GM12878 (cell line): ENCODE measurements at regions of chr12 and their contacts with region 1.

Region 1: GRCh38 chr12:107251288-107251687 is 157.9 kb upstream of the CRY1 start:
- DNase-seq: no peak
- ATAC-seq: no peak
- H3K4me3 ChIP-seq: no peak overlapping the region
- H3K27ac ChIP-seq: no peak overlapping the region
- H3K4me1 ChIP-seq: no peaks in the 10 kb centered on the region
- H3K27me3 ChIP-seq: no peaks in the 10 kb centered on the region
- CTCF ChIP-seq: no peak
- EP300 ChIP-seq: no peak
- POLR2A ChIP-seq: no peak
- RAD21 ChIP-seq: no peak

Region 2: GRCh38 chr12:107027636-107028053 is 223.6 kb before region 1 on chr12:
- CTCF ChIA-PET with region 1: no interaction called
- POLR2A ChIA-PET with region 1: no interaction called
- RAD21 ChIA-PET with region 1: no interaction called
- SMC1A ChIA-PET with region 1: no interaction called
- in situ Hi-C with region 1: no loop called
- intact Hi-C with region 1: no loop called
- DNase-seq: no peak
- ATAC-seq: no peak; the same call in 1 of the 3 replicates
- H3K4me3 ChIP-seq: no peak overlapping the region
- H3K27ac ChIP-seq: no peak overlapping the region
- H3K4me1 ChIP-seq: no peaks in the 10 kb centered on the region
- H3K27me3 ChIP-seq: no peaks in the 10 kb centered on the region
- CTCF ChIP-seq: no peak
- EP300 ChIP-seq: no peak
- POLR2A ChIP-seq: no peak
- RAD21 ChIP-seq: no peak

Region 3: GRCh38 chr12:107196681-107197080 is 54.6 kb before region 1 on chr12:
- CTCF ChIA-PET with region 1: no interaction called
- POLR2A ChIA-PET with region 1: no interaction called
- RAD21 ChIA-PET with region 1: no interaction called
- SMC1A ChIA-PET with region 1: no interaction called
- in situ Hi-C with region 1: no loop called
- intact Hi-C with region 1: loop called (anchors 2 kb)
- DNase-seq: no peak
- ATAC-seq: no peak
- H3K4me3 ChIP-seq: no peak overlapping the region
- H3K27ac ChIP-seq: no peak overlapping the region
- H3K4me1 ChIP-seq: no peaks in the 10 kb centered on the region
- H3K27me3 ChIP-seq: no peaks in the 10 kb centered on the region
- CTCF ChIP-seq: no peak
- EP300 ChIP-seq: no peak
- POLR2A ChIP-seq: no peak
- RAD21 ChIP-seq: no peak

Region 4: DNA sequence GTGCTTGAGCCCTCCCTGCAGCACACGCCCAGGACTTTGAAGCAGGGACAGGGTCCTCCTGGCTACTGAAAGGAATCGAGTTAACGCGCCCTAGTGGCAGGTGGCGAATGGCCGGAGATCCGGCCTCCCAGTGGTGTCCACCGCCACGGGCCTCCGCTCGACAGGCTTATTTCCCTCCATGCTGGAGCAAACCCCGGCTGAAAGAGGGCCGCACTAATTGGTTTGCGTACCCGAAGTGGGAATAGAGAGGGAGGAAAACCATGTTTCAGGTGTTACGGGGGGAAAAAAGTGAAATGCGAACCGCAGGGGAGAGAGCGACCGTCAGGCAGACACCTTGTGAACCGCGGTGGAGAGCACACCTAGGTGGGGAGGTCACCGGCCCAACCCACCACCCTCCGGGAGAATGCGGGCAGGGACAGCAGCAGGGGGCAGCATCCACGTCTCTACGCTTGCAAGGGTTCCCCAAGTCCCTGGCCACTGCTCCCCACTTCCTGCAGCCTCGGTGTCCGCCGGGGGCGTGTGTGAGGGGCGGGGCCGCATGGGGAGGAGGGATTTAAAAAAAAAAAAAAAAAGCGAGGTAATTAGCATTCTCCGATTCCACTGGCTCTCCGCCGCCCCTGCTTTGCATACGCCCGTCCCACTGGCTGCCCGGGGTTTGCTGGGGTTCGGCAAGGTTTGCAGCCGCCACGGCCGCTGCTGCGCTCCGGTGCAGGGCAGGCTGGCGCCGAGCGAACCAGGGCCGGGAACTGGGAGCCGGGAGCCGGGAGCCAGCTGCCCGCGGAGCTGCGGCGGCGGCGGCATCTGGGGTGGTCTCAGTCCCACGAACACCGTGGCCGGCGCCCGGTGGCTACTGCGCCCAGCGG is 66.7 kb after region 1 on chr12:
- CTCF ChIA-PET with region 1: no interaction called
- POLR2A ChIA-PET with region 1: no interaction called
- RAD21 ChIA-PET with region 1: no interaction called
- SMC1A ChIA-PET with region 1: no interaction called
- in situ Hi-C with region 1: no loop called
- intact Hi-C with region 1: no loop called
- DNase-seq: no peak
- ATAC-seq: peak; percentile 46; the same call in 2 of the 3 replicates
- H3K4me3 ChIP-seq: no peak overlapping the region
- H3K27ac ChIP-seq: no peak overlapping the region
- H3K4me1 ChIP-seq: no peaks in the 10 kb centered on the region
- H3K27me3 ChIP-seq: peaks cover 14 to 16% of the 10 kb centered on the region in 2 experiments
- CTCF ChIP-seq: no peak
- EP300 ChIP-seq: no peak
- POLR2A ChIP-seq: no peak
- RAD21 ChIP-seq: no peak